Ovary (tissue), 10 donors: ENCODE measurements at regions of chr6 and their contacts with region 1.

Region 1: GRCh38 chr6:7086488-7086887 is 21.3 kb upstream of the RREB1 start:
- DNase-seq: peak; percentile 41 to 64 (median 55)
- H3K4me3 ChIP-seq: peak overlapping the region; percentile 33
- H3K27ac ChIP-seq: peak overlapping the region in 1 of 2 donors; percentile 68
- H3K4me1 ChIP-seq: no peaks in the 10 kb centered on the region
- H3K27me3 ChIP-seq: no peaks in the 10 kb centered on the region
- CTCF ChIP-seq: no peak
- EP300 ChIP-seq: no peak
- POLR2A ChIP-seq: no peak

Region 2: DNA sequence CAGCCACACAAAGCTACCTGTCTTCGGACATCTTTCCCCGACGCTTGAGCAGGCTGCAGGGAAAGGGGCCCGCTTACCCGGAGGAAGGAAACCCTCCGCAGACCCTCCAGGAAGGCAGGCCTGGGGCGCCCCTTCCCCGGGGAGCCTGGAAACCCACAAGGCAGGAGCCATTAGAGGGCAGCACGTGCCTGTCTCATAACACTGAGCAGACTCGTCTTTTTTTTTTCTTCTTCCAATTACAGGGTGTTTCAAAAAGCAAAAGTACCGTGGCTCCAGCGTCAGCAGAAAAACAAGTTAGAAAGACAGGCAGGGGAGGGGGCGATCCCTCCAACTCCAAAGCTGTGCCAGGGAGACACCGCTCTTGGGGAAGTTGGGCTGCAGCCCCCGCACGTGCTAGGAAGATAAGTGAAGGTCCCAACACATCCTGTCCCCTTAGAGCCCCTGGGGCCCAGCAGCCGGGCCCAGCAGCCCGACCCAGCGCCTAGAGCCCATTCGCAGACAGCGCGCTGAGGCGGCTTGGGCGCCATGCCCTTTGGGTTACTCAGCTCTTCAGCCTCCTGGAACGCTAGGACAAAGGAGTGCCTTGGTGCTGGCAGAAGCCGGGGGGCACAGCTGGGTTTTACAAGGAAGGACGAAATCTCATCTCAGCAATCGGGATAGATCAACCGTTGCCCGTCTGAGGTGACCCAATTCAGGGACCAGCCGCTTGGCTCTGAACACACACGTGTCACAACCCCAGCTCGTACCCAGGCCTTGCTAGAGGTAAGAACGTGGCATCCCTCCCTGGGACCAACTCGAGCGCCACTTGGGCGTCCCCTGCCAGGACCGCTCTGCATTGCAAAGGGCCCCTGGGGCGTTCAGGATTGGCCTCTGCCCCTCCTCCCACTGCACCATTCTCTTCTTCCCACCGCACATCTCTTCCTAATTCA is 361.7 kb before region 1 on chr6:
- intact Hi-C with region 1: loop called in 1 of 4 experiments (anchors 10 kb)
- DNase-seq: peak; percentile 82 to 86 (median 85)
- H3K4me3 ChIP-seq: peak overlapping the region; percentile 34
- H3K27ac ChIP-seq: peak overlapping the region; percentile 82 to 83
- H3K4me1 ChIP-seq: peaks cover 6% of the 10 kb centered on the region
- H3K27me3 ChIP-seq: no peaks in the 10 kb centered on the region
- CTCF ChIP-seq: peak; percentile 56 to 72 (median 59)
- EP300 ChIP-seq: no peak
- POLR2A ChIP-seq: no peak